GM10248 (cell line): ENCODE measurements at regions of chr15 and their contacts with region 1.

Region 1: GRCh38 chr15:57306161-57306943 is 70.0 kb upstream of the CGNL1 start:
- DNase-seq: peak; percentile 90
- CTCF ChIP-seq: peak; percentile 95

Region 2: GRCh38 chr15:56821721-56822425 is 484.5 kb before region 1 on chr15:
- CTCF ChIA-PET with region 1: interaction called, 10 read pairs
- POLR2A ChIA-PET with region 1: no interaction called
- DNase-seq: peak; percentile 43
- CTCF ChIP-seq: peak; percentile 63

Region 3: DNA sequence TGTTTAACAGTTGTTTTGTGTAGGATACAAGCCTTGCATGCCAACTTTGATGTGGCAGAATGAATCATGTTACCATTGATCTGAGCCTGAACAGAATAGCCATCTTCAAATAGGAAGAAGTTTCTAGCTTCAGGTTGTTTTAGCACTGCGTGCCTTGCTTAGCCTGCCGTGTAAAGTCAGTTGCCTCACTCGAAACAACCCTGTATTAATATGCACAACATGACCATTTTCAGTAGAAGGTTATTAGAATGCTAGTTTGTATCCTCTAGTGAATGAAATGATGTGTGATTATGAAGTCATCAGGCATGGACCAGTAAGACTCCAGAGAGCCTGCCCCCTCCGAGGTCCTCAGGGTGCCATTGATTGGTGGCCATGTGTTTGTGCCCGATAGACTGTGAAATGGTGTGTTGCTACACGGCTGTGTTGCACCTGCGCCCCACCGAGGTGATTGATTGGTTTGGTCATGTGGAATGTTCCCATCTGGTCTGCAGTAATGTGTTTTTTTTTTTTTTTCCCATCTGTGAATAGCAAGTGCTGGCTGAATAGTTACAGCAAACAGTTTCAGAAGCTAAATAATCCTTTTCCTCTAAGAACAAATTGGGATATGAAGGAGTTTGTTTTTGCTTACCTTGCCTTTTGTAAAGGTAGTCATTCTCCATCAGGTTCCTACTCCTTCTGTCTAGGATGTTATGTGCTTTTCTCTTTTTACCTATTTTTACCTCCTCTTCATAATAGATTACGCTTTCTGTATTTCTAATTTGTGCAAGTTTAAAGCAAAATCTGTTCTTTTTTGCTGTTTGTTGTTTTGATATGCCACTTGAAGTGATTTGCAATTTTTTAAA is 173.0 kb before region 1 on chr15:
- CTCF ChIA-PET with region 1: interaction called, 10 read pairs
- POLR2A ChIA-PET with region 1: no interaction called
- DNase-seq: peak; percentile 41
- CTCF ChIP-seq: no peak

Region 4: DNA sequence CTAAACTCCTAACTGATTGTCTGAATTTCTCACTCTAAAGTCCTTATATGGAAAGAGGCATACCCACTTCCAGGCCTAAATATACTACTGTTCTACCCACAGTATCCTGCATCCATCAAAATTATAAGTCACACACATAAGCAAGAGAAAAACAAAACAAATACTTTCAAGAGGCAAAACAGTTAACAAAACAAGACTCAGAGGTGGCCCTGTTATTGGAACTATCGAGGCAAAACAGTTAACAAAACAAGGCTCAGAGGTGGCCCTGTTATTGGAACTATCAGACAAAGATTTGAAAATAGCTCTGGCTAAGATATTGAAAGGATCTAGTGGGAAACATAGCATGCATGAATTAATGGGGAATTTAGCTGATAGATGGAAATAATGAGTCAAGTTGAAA is 154.2 kb before region 1 on chr15:
- CTCF ChIA-PET with region 1: interaction called, 163 read pairs
- POLR2A ChIA-PET with region 1: no interaction called
- DNase-seq: no peak
- CTCF ChIP-seq: no peak

Region 5: DNA sequence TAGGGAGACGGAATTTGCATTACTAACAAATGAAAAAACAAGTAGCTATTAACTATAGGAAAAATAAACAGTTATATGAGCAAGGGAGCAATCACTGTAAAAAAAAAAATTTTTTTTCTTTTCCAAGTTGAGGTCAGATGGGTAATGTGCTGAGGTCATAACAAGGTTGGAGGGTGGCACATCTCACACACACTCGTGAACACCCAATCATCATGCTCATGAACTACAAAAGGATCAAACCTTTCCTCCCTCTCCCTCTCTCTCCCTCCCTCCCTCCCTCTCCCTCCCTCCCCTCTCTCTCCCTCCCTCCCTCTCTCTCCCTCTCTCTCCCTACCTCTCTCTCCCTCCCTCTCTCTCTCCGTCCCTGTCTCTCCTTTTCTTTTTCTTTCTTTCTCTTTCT is 27.9 kb before region 1 on chr15:
- CTCF ChIA-PET with region 1: interaction called, 13 read pairs
- POLR2A ChIA-PET with region 1: no interaction called
- DNase-seq: no peak
- CTCF ChIP-seq: no peak

Region 6: GRCh38 chr15:57284535-57284934 is 21.8 kb before region 1 on chr15:
- CTCF ChIA-PET with region 1: interaction called, 13 read pairs
- POLR2A ChIA-PET with region 1: no interaction called
- DNase-seq: no peak
- CTCF ChIP-seq: no peak

Region 7: GRCh38 chr15:57334257-57334656 is 27.9 kb after region 1 on chr15:
- CTCF ChIA-PET with region 1: no interaction called
- POLR2A ChIA-PET with region 1: no interaction called
- DNase-seq: no peak
- CTCF ChIP-seq: no peak

Region 8: DNA sequence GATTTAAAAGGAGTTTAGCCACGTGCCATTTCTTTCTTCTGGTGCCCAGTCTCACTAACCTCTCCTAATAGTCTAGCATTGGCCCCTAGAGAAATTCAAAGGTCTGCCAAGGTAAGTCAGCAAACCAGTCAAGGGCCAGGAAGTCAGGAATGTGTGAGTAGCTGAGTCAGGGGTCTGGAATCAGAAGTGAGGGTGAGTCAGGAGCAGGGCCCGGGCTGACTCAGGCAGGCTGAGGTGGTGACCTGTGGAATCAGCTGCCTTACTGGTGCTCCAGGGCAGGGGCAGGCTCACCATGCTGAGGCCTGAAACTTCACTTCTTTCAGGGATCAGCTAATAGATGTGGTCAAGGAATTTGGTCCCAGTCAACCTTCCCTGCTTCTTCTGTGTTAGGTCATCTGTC is 179.5 kb after region 1 on chr15:
- CTCF ChIA-PET with region 1: no interaction called
- POLR2A ChIA-PET with region 1: no interaction called
- DNase-seq: no peak
- CTCF ChIP-seq: no peak